PC-3 (cell line): ENCODE measurements at regions of chr20 and their contacts with region 1.

Region 1: GRCh38 chr20:46814366-46815242 is 80.0 kb upstream of the EYA2 start:
- DNase-seq: peak; percentile 96
- ATAC-seq: peak; percentile 100
- H3K4me3 ChIP-seq: peak overlapping the region; percentile 43
- H3K27ac ChIP-seq: peak overlapping the region; percentile 73
- H3K4me1 ChIP-seq: peaks cover 29% of the 10 kb centered on the region
- H3K27me3 ChIP-seq: peaks cover 8% of the 10 kb centered on the region
- CTCF ChIP-seq: no peak

Region 2: GRCh38 chr20:46828471-46828870 is 13.9 kb after region 1 on chr20:
- CTCF ChIA-PET with region 1: no interaction called
- POLR2A ChIA-PET with region 1: no interaction called
- intact Hi-C with region 1: loop called (anchors 1 kb)
- DNase-seq: peak; percentile 59
- ATAC-seq: peak; percentile 68
- H3K4me3 ChIP-seq: no peak overlapping the region
- H3K27ac ChIP-seq: no peak overlapping the region
- H3K4me1 ChIP-seq: peaks cover 15% of the 10 kb centered on the region
- H3K27me3 ChIP-seq: peaks cover 4% of the 10 kb centered on the region; the same call in 1 of the 2 replicates
- CTCF ChIP-seq: no peak

Region 3: GRCh38 chr20:46959081-46959692 is 144.6 kb after region 1 on chr20:
- CTCF ChIA-PET with region 1: no interaction called
- POLR2A ChIA-PET with region 1: no interaction called
- intact Hi-C with region 1: loop called (anchors 1 kb)
- DNase-seq: peak; percentile 99
- ATAC-seq: peak; percentile 93
- H3K4me3 ChIP-seq: peak overlapping the region; percentile 53; the same call in 1 of the 2 replicates
- H3K27ac ChIP-seq: peak overlapping the region; percentile 92
- H3K4me1 ChIP-seq: peaks cover 55% of the 10 kb centered on the region
- H3K27me3 ChIP-seq: no peaks in the 10 kb centered on the region
- CTCF ChIP-seq: no peak